Activated naive CD4-positive, alpha-beta T cell treated with anti-CD3 and anti-CD28 coated beads for 36 hours (primary cell): ENCODE measurements at regions of chr10 and their contacts with region 1.

Region 1: GRCh38 chr10:5813287-5814109 is at the start of gene GDI2:
- DNase-seq: peak; percentile 98
- H3K4me3 Mint-ChIP-seq: peak within 1 kb of the TSS; percentile 84
- H3K27ac Mint-ChIP-seq: peak within 1 kb of the TSS; percentile 90
- H3K4me1 Mint-ChIP-seq: peaks cover 66% of the 10 kb centered on the region
- H3K27me3 Mint-ChIP-seq: no peaks in the 10 kb centered on the region
- total RNA-seq, gene GDI2: 277 to 288 TPM

Region 2: DNA sequence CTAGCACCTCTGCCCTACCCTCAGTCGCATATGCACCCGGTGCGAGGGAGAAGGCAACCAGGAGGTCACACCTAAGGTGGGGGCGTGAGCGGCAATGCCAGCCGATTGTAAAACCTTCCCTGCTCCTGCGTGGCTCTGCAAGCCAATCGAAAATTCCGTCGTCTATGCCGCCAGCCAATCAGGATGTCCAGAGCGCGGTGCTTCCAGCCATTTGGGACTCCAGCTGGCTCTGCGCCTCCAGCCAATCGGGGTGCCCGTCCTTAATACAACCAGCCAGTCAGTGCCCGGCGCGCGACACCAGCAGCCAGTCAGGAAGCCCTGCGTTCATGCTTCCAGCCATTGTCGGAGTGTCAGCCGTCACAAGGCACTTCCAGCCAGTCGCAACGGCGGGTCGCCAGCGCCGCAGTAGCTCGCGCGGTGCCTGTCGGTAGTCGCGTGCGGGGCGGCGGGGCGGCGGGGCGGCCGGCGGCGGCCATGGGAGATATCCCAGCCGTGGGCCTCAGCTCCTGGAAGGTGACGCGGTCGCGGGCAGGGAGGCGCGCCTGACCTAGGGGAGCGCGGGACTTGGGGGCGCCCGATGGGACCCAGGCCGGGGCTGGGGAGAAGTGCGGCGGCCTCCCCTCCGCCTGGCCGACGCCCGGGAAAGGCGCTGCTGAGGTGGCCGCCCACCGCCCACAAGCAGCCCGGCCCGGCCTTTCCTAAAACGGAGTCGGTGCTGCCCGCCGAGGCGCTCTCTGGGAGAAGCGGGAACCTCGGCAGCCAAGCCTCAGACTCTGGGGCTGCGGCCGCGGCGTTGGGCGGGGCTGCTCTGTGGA is 987.4 kb before region 1 on chr10 and contains the start of gene AKR1E2:
- CTCF ChIA-PET with region 1: no interaction called
- intact Hi-C with region 1: loop called (anchors 5 kb)
- DNase-seq: peak; percentile 87
- H3K4me3 Mint-ChIP-seq: peak within 1 kb of the TSS; percentile 73
- H3K27ac Mint-ChIP-seq: peak within 1 kb of the TSS; percentile 33
- H3K4me1 Mint-ChIP-seq: peaks cover 21% of the 10 kb centered on the region
- H3K27me3 Mint-ChIP-seq: no peaks in the 10 kb centered on the region
- total RNA-seq, gene AKR1E2: 7.1 to 7.3 TPM

Region 3: DNA sequence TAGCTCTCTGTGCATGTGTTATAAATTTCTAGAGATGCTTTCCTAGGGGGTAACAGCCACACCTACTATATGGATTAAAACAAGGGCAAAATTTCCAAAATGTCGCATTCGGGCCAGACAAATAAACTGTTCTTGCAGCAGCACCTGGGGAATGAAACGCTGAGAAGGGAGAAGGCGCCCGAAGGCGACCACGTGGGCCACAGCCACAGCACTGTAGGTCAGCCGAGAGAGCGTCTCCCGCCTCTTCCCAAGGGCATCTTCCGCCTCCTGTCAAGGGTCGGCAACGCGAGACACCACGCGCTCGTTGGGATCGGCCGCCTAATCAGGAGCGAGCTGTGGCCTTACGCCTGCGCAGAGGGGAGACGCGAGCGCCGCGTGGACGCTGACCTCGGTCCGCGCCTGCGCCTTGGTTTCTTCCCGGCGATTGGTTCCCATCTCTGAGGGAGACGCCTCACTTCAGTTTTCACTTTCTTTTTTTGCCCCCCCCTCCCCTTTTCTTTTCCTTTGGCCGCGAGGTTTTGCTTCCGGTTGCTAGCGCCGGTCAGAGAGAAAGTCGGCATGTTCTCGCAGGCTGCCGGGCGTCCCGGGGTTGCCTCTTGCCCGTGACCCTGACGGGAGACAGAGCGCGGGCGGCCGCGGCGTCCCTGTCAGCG is 129.1 kb before region 1 on chr10 and contains the start of gene TASOR2:
- CTCF ChIA-PET with region 1: interaction called, 3 read pairs
- intact Hi-C with region 1: loop called (anchors 1 kb)
- DNase-seq: peak; percentile 98
- H3K4me3 Mint-ChIP-seq: peak within 1 kb of the TSS; percentile 87
- H3K27ac Mint-ChIP-seq: peak within 1 kb of the TSS; percentile 94
- H3K4me1 Mint-ChIP-seq: peaks cover 45% of the 10 kb centered on the region
- H3K27me3 Mint-ChIP-seq: no peaks in the 10 kb centered on the region
- total RNA-seq, gene TASOR2: 36.4 to 37.7 TPM

Region 4: DNA sequence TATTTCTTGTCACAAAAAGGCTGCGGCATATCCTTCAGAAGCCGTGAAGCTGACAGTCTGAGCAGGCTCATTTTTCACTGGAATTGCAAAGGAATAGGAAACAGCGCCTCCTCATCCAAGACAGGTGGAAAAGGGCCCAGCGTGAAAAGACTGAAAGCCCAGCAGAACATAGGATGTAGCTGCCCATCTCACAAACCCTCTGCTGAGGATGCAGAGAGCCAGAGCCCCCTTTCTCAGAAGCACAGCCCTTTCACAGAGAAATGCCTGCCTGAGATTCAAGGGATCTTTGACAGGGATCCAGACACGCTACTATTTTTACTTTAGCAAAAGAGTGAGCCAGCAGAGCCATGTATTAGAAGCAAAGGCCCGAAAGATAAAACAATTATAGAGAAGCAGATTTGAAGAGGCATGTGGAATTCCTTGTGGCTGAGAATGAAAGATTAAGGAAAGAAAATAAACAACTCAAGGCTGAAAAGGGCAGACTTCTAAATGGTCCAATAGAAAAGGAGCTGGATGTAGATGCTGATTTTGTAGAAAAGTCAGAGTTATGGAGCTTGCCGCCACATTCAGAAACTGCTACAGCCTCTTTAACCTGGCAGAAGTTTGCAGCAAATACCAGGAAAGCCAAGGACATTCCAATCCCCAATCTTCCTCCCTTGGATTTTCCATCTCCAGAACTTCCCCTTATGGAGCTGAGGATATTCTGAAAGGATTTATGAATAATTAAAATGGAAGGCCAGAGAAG is 37.2 kb before region 1 on chr10:
- CTCF ChIA-PET with region 1: no interaction called
- intact Hi-C with region 1: loop called (anchors 5 kb)
- DNase-seq: no peak
- H3K4me3 Mint-ChIP-seq: peak overlapping the region; percentile 26
- H3K27ac Mint-ChIP-seq: peak overlapping the region; percentile 74
- H3K4me1 Mint-ChIP-seq: peaks cover 56% of the 10 kb centered on the region
- H3K27me3 Mint-ChIP-seq: no peaks in the 10 kb centered on the region

Region 5: GRCh38 chr10:5889624-5890451 is 76.3 kb after region 1 on chr10 and contains the starts of genes ANKRD16 and FBH1:
- CTCF ChIA-PET with region 1: interaction called, 3 read pairs
- intact Hi-C with region 1: loop called (anchors 1 kb)
- DNase-seq: peak; percentile 97
- H3K4me3 Mint-ChIP-seq: peak within 1 kb of the TSS; percentile 92
- H3K27ac Mint-ChIP-seq: peak within 1 kb of the TSS; percentile 74
- H3K4me1 Mint-ChIP-seq: peaks cover 55% of the 10 kb centered on the region
- H3K27me3 Mint-ChIP-seq: no peaks in the 10 kb centered on the region
- total RNA-seq, gene ANKRD16: 3.6 to 3.9 TPM
- total RNA-seq, gene FBH1: 40.4 to 42.7 TPM

Region 6: DNA sequence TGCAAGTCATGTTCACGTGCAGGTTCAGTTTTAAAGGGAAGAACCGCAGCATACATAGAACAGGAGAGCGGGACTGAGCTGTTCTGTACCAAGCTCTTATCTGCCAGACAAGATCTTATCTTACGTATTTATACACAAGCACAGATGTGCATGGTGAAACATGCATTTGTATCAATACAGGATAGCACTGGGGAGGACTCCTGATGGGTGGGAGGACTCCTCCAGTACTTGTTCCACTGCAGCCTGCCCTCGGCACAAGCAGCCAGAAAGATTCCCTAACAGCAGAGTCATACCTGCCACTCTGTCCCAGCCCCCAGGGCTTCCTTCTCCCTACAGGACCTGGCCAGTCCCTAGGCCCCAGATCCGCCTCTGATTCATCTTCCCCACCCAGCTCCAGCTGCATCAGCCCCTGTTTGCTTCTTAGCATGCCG is 779.8 kb after region 1 on chr10:
- CTCF ChIA-PET with region 1: no interaction called
- intact Hi-C with region 1: loop called (anchors 10 kb)
- DNase-seq: peak; percentile 54
- H3K4me3 Mint-ChIP-seq: peak overlapping the region; percentile 55
- H3K27ac Mint-ChIP-seq: peak overlapping the region; percentile 96
- H3K4me1 Mint-ChIP-seq: peaks cover 89% of the 10 kb centered on the region
- H3K27me3 Mint-ChIP-seq: no peaks in the 10 kb centered on the region